ENCODE measurements at regions of chr17 and their contacts with region 1.

Region 1: GRCh38 chr17:78140169-78140976 is 5.8 kb upstream of the C17orf99 start:
- DNase-seq: peak; percentile 99
- H3K4me3 Mint-ChIP-seq: peak overlapping the region; percentile 31
- H3K27ac Mint-ChIP-seq: peak overlapping the region; percentile 76
- H3K4me1 Mint-ChIP-seq: peaks cover 49% of the 10 kb centered on the region
- H3K27me3 Mint-ChIP-seq: no peaks in the 10 kb centered on the region

Region 2: GRCh38 chr17:78128551-78129350 is 11.6 kb before region 1 on chr17 and contains the start of gene TMC6:
- intact Hi-C with region 1: loop called (anchors 1 kb)
- DNase-seq: peak; percentile 91
- H3K4me3 Mint-ChIP-seq: peak within 1 kb of the TSS; percentile 99
- H3K27ac Mint-ChIP-seq: peak within 1 kb of the TSS; percentile 97
- H3K4me1 Mint-ChIP-seq: peaks cover 52% of the 10 kb centered on the region
- H3K27me3 Mint-ChIP-seq: no peaks in the 10 kb centered on the region
- total RNA-seq, gene TMC6: 250 and 251 TPM in 2 replicates

Region 3: GRCh38 chr17:78214706-78215061 is 74.3 kb after region 1 on chr17:
- intact Hi-C with region 1: loop called (anchors 1 kb)
- DNase-seq: no peak
- H3K4me3 Mint-ChIP-seq: peak overlapping the region; percentile 94
- H3K27ac Mint-ChIP-seq: peak overlapping the region; percentile 90
- H3K4me1 Mint-ChIP-seq: peaks cover 12% of the 10 kb centered on the region
- H3K27me3 Mint-ChIP-seq: no peaks in the 10 kb centered on the region

Measured in activated CD4-positive, alpha-beta T cell treated with anti-CD3 and anti-CD28 coated beads, Interleukin-2, amount 10 ng/mL, durations not matched to agents 24 days and 14 days (primary cell).